Ascending aorta (tissue), 2 donors: ENCODE measurements at regions of chr9 and their contacts with region 1.

Region 1: GRCh38 chr9:34328987-34329832 is at the starts of genes KIF24 and NUDT2:
- DNase-seq: peak; percentile 97 to 99
- H3K4me3 ChIP-seq: peak within 1 kb of the TSS; percentile 84 to 89
- H3K27ac ChIP-seq: peak within 1 kb of the TSS; percentile 88 to 93
- H3K4me1 ChIP-seq: peaks cover 0 to 9% of the 10 kb centered on the region in 2 donors
- H3K27me3 ChIP-seq: no peaks in the 10 kb centered on the region
- CTCF ChIP-seq: no peak
- total RNA-seq, gene KIF24: 0.21 TPM
- total RNA-seq, gene NUDT2: not detected

Region 2: GRCh38 chr9:34025062-34025461 is 304.1 kb before region 1 on chr9:
- intact Hi-C with region 1: no loop called
- DNase-seq: no peak
- H3K4me3 ChIP-seq: no peak overlapping the region
- H3K27ac ChIP-seq: no peak overlapping the region
- H3K4me1 ChIP-seq: no peaks in the 10 kb centered on the region
- H3K27me3 ChIP-seq: no peaks in the 10 kb centered on the region
- CTCF ChIP-seq: no peak

Region 3: DNA sequence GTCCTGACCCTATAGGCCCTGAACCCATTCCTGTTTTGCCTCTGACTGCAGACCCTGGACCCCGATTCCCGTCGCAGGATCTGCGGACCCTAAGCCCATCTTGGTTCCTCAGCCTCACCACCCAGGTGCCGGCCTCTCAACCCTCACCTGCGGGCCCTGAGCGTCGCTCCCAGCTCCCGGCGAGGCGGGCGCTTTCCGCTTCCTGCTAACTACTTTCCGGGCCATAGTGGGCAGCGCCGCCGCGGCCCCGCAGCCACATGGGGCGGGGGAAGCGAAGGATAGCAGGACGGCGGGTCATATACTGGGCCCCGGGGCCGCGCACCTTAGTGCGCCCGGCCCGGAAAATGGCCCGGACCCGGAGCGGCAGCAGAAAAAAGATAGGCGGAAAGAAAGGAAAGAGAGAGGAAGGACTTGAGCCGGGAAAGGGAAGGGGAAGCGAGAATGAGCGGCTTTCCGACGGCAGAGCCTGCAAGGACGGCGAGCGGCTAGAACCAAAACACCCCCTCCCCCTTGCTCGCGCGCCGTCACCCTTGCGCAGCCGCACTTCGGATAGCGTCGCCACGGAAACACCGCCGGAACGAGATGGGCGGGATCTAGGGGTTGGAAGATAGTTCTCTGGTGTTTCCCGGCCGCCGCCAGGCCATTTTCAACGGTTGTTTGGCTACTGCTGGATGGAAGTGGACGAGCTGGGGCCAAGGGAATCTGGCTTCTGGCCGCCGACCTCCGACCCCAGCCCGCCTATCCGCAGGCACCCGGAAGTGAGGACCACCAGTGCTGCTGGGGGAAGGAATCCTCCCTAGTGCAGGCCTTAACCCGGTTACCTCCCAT is 202.8 kb before region 1 on chr9 and contains the start of gene DCAF12:
- intact Hi-C with region 1: loop called (anchors 2 kb)
- DNase-seq: peak; percentile 31 to 93
- H3K4me3 ChIP-seq: peak within 1 kb of the TSS; percentile 61 to 85
- H3K27ac ChIP-seq: peak within 1 kb of the TSS; percentile 90 to 95
- H3K4me1 ChIP-seq: peaks cover 9 to 12% of the 10 kb centered on the region in 2 donors
- H3K27me3 ChIP-seq: no peaks in the 10 kb centered on the region
- CTCF ChIP-seq: peak in 1 of 3 experiments; percentile 22
- total RNA-seq, gene DCAF12: 27.5 TPM

Region 4: DNA sequence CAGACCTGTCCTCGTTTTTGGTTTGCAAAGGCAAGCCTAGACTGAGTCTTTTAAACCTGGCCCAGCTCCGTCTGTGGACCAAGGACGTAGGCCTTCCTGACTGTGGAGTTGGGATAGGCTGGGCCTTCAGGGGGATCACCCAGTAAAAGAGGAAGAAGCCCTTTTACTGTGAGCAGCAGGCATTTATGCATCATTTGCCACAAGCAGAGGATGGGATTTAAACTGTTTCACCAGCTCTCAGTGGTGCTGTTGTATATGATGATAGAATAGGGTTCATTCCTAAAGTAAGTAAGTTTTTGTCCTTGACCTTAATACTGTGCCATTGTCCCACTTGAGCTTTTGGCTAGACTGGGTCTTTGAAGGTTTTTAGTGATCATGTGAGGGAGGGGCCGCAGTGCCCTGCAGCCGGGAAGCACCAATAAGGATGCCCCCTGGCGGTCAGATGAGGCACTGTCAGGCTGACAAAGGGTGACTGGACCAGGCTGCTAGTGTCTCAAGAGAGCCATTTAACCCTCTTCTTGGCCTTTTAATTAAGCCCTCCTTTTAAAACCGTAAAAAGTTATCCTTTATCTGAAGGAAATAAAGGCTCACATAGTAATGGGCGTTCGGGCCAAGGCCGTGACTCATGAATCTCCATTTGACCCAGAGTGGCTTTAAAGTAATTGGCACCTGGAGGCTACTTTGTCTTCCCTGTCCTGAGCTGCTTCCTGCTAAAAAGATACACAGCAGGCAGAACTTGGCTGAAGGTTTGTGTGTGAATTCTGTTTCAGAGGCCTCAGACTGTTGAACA is 76.3 kb before region 1 on chr9:
- intact Hi-C with region 1: loop called (anchors 2 kb)
- DNase-seq: peak in 1 of 2 donors; percentile 71
- H3K4me3 ChIP-seq: no peak overlapping the region
- H3K27ac ChIP-seq: peak overlapping the region; percentile 79 to 81
- H3K4me1 ChIP-seq: peaks cover 16 to 48% of the 10 kb centered on the region in 2 donors
- H3K27me3 ChIP-seq: no peaks in the 10 kb centered on the region
- CTCF ChIP-seq: peak; percentile 59 to 86 (median 77)

Region 5: DNA sequence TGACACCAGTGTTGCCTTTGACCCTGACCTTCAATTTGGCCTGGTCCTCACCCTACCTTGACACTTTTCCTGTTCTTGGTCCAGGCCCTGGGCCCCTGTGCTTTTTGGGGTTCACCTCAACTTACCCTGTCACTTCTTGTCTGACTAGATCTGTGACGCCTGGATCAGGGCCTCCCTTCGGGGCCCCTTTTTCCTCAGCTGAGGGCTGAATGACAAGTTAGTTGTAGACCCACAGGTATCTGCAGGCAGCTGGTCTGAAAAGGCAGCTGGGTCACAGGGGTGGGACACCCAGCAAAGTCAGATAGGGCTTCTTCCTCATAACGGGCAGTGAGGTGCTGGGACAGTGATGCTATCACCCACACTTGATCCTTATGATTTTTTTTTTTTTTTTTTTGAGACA is 57.4 kb after region 1 on chr9:
- intact Hi-C with region 1: no loop called
- DNase-seq: no peak
- H3K4me3 ChIP-seq: no peak overlapping the region
- H3K27ac ChIP-seq: no peak overlapping the region
- H3K4me1 ChIP-seq: no peaks in the 10 kb centered on the region
- H3K27me3 ChIP-seq: no peaks in the 10 kb centered on the region
- CTCF ChIP-seq: no peak

Region 6: GRCh38 chr9:34458013-34458958 is 129.1 kb after region 1 on chr9 and contains the starts of genes DNAI1 and FAM219A:
- intact Hi-C with region 1: loop called (anchors 1 kb)
- DNase-seq: peak; percentile 95 to 99
- H3K4me3 ChIP-seq: peak within 1 kb of the TSS; percentile 79 to 94
- H3K27ac ChIP-seq: peak within 1 kb of the TSS; percentile 76 to 88
- H3K4me1 ChIP-seq: peaks cover 0 to 28% of the 10 kb centered on the region in 2 donors
- H3K27me3 ChIP-seq: no peaks in the 10 kb centered on the region
- CTCF ChIP-seq: no peak
- total RNA-seq, gene DNAI1: not detected
- total RNA-seq, gene FAM219A: 26.8 TPM

Region 7: DNA sequence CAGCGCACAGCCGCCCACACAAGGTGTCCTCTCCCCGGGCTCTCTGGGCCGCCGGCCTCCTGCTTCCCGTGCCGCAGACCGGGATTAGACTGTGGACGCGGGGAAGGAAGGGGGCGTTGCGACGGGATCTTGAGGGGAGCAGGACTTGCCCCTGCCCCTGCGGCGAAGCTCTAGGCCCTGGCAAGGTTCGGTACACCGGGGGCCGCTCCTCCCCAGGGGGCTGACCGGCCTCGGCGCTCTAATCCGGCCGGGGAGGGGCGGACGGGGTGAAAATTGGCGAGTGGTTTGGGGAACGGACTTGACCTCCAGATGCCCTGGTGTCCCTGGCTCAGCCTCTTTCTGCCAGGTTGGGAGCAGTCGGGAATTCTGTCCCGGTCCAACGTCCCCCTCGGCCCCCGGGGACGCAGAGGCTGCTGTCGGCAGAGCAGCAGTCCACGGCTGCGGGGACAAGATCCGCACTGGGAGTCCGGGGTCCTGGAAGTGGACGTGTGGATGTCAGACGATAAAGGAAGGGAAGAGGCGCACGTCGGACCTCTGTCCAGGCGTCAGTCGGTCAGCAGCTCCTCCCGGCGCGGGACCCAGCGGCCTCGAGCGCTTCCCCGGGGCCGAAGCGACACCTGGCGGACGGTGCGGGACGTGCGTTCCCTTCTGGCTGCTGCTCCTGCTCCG is 262.2 kb after region 1 on chr9:
- intact Hi-C with region 1: loop called (anchors 5 kb)
- DNase-seq: peak; percentile 44 to 90
- H3K4me3 ChIP-seq: peak overlapping the region; percentile 46 to 72
- H3K27ac ChIP-seq: peak overlapping the region; percentile 26 to 39
- H3K4me1 ChIP-seq: peaks cover 6 to 42% of the 10 kb centered on the region in 2 donors
- H3K27me3 ChIP-seq: peaks cover 7% of the 10 kb centered on the region
- CTCF ChIP-seq: peak; percentile 86 to 94 (median 93)